ENCODE measurements at regions of chr20 and their contacts with region 1.

Region 1: DNA sequence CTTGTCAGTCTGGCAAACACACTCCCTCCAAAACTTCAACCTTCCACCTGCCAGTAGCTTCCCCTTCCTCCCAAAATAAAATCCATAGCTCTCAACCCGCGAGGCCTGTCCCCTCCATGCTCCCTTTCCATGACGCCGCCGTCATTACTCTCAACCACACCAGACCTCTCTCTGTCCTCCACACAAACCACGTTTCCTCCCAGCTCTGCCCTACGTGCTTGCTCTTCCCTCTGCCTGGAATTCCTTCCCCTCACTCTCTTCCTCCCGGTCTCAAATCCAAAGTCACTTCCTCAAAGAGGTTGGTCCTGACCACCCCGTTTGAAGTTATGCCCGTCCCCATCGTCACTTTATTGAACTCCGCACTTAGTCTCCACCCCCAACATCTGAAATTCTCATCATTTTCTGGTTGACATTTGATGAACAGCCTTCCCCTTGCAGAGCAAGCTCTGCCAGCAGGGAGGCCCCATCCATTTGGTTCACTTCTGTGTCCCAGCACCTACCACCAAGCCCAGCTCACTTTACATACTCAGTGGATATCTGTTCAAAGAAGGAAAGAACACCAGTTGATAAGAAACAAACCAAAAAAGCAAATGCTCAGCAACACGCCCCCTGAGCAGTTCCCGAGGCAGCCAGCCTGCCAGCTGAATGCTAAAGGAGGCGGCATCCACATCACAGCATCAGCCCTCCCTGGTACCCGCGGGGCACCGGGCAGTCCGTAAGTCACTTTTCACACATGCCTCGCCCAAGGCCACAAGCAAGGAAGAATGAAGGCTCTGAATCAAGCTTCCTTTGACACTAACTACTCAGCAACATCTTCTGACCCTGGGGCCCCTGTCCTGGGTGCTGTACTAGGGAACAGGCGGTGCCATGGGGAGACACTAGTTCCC is 125.0 kb downstream of the NFATC2 start:
- DNase-seq: peak; percentile 34 to 73 (median 44)
- H3K4me3 ChIP-seq: no peak overlapping the region
- H3K4me3 Mint-ChIP-seq: peak overlapping the region in 7 of 8 donors; percentile 54 to 84 (median 73)
- H3K27ac ChIP-seq: peak overlapping the region; percentile 65
- H3K27ac Mint-ChIP-seq: peak overlapping the region; percentile 87 to 97 (median 95)
- H3K4me1 ChIP-seq: peaks cover 85% of the 10 kb centered on the region
- H3K4me1 Mint-ChIP-seq: peaks cover 52 to 96% (median 71%) of the 10 kb centered on the region in 4 donors
- H3K27me3 ChIP-seq: no peaks in the 10 kb centered on the region
- H3K27me3 Mint-ChIP-seq: no peaks in the 10 kb centered on the region

Region 2: DNA sequence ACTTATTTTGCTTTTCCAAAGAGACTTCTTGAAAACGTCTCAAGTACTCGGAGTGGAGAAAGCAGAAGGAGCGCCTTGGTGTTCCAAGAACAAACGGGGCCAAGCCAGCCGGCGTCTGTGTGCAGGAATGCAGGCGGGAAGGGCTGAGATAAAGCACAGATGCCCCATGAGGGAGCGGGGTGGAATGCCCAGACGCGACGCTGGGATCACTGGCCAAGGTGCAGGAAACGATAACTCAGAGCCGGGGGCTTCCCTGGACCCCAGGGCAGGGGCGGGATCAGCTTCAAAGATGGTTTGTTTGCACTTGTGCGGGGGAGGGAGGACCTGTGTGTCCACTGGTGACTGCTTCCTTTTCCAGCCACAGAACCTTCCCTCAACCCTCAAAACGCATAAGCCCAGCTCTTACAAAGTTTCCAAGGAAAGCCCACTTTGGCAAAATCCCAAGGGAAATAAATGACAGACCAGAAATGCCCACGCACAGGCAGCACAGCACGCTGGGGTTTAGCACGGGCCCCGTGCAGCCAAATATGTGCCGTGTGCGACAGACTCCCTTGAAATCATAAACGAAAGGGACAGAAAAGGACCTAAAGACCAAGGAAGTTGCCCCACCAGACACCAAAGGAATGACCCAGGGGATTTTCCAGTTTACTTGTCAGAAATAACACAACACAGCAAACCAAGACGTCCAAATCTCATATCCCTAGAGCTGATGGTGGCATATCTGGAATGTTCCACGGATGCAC is 11.1 kb after region 1 on chr20:
- CTCF ChIA-PET with region 1: interaction called, 7 read pairs
- POLR2A ChIA-PET with region 1: interaction called, 21 read pairs
- intact Hi-C with region 1: no loop called
- DNase-seq: no peak
- H3K4me3 ChIP-seq: no peak overlapping the region
- H3K4me3 Mint-ChIP-seq: no peak overlapping the region
- H3K27ac ChIP-seq: no peak overlapping the region
- H3K27ac Mint-ChIP-seq: peak overlapping the region in 4 of 7 donors; percentile 54 to 87 (median 76)
- H3K4me1 ChIP-seq: peaks cover 84% of the 10 kb centered on the region
- H3K4me1 Mint-ChIP-seq: peaks cover 56 to 90% (median 74%) of the 10 kb centered on the region in 4 donors
- H3K27me3 ChIP-seq: no peaks in the 10 kb centered on the region
- H3K27me3 Mint-ChIP-seq: no peaks in the 10 kb centered on the region

Region 3: DNA sequence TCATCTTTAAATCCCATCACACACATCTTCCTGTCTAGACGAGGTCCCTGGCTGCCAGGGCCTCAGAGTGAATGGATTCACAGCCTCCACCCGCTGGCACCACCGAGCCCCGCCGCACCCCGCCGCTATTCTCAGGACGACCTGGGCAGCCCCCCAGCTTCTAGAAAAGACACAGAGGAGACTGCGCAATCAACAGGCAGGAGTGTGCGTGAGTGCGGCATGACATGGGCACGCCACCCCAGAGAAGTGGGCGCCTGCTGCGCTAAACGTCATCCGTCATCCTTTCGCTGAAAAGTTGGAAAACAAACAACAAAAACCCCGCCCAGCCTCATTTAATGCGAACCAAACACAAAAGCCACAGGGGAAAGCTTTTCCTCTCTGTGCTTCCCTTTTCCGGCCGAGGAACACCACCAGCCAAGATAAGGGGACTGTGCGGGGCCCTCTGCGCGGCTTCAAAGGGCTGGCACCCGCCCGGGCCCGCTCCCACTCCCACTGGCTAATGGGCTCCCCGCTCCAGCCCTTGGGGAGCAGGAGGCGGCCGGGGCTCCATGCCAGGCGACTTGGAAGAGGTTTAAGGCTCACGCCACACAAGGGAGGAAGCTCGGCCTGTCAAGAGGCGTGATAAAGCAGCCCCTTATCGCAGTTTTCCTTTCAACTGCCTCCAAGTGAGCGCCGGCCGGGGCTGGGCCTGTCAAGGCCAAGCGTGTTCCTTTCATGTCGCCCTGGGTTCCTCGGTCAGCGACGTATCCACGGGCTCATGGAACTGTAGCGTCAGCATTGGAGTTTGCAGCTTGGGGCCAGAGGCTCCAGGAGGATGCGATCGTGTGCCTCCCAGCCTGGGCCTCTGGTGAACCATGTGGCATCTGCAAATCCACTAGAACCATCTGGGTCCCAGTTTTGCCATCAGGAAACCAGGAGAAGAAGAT is 74.9 kb after region 1 on chr20:
- CTCF ChIA-PET with region 1: no interaction called
- POLR2A ChIA-PET with region 1: interaction called, 15 read pairs
- intact Hi-C with region 1: no loop called
- DNase-seq: no peak
- H3K4me3 ChIP-seq: no peak overlapping the region
- H3K4me3 Mint-ChIP-seq: peak overlapping the region in 5 of 8 donors; percentile 31 to 81 (median 35)
- H3K27ac ChIP-seq: peak overlapping the region; percentile 51
- H3K27ac Mint-ChIP-seq: peak overlapping the region in 6 of 7 donors; percentile 70 to 99 (median 81)
- H3K4me1 ChIP-seq: peaks cover 75% of the 10 kb centered on the region
- H3K4me1 Mint-ChIP-seq: peaks cover 66 to 97% (median 85%) of the 10 kb centered on the region in 4 donors
- H3K27me3 ChIP-seq: no peaks in the 10 kb centered on the region
- H3K27me3 Mint-ChIP-seq: no peaks in the 10 kb centered on the region

Region 4: GRCh38 chr20:52312132-52312729 is 894.7 kb after region 1 on chr20:
- CTCF ChIA-PET with region 1: no interaction called
- POLR2A ChIA-PET with region 1: no interaction called
- intact Hi-C with region 1: no loop called
- DNase-seq: peak; percentile 44 to 69 (median 64)
- H3K4me3 ChIP-seq: no peak overlapping the region
- H3K4me3 Mint-ChIP-seq: no peak overlapping the region
- H3K27ac ChIP-seq: no peak overlapping the region
- H3K27ac Mint-ChIP-seq: no peak overlapping the region
- H3K4me1 ChIP-seq: peaks cover 2% of the 10 kb centered on the region
- H3K4me1 Mint-ChIP-seq: peaks cover 5 to 26% (median 12%) of the 10 kb centered on the region in 4 donors
- H3K27me3 ChIP-seq: no peaks in the 10 kb centered on the region
- H3K27me3 Mint-ChIP-seq: no peaks in the 10 kb centered on the region

Measured in CD4-positive, alpha-beta memory T cell (primary cell).